ENCODE measurements at regions of chr11 and their contacts with region 1.

Region 1: DNA sequence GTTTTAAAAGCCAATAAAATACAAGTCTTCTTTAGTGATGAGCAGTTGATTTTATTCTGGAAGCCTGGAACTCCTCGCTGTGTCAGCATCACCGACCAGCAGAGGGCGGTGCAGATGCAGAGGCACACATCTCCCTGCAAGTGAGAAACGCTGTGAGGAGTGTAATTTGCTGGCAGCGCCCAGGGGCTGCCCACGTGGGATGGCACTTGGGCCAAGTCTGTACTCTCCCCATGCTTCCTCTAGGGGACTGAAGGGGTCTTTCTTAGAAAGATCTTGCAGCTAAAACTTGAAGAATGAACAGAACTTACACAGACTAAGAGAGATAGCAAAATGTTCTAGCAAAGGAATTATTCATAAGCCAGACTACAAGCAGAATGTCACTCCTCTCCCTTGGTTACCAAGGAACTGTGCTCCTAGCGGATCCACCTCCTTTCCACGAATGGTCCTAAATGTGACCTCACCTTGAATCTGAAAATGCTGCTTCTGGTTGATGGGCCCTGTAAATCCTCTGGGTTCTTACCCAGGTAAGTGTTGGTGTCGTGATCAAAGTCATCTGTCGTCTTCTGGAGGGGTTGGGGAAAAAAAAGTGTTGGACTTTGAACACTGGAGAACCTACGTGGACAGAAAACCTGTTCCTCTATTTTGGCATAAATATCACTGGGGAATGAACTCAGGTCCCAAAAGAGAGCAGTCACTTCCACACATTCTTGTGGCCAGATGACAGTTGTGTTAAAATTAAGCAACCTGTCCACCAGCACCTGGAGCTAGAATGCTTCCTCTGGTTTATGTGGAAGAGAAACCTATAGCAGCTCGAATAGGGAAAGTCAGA is 31.8 kb downstream of the CNTF start:
- DNase-seq: peak; percentile 51
- H3K4me3 Mint-ChIP-seq: no peak overlapping the region
- H3K27ac Mint-ChIP-seq: no peak overlapping the region
- H3K4me1 Mint-ChIP-seq: peaks cover 9% of the 10 kb centered on the region
- H3K27me3 Mint-ChIP-seq: peaks cover 4% of the 10 kb centered on the region

Region 2: DNA sequence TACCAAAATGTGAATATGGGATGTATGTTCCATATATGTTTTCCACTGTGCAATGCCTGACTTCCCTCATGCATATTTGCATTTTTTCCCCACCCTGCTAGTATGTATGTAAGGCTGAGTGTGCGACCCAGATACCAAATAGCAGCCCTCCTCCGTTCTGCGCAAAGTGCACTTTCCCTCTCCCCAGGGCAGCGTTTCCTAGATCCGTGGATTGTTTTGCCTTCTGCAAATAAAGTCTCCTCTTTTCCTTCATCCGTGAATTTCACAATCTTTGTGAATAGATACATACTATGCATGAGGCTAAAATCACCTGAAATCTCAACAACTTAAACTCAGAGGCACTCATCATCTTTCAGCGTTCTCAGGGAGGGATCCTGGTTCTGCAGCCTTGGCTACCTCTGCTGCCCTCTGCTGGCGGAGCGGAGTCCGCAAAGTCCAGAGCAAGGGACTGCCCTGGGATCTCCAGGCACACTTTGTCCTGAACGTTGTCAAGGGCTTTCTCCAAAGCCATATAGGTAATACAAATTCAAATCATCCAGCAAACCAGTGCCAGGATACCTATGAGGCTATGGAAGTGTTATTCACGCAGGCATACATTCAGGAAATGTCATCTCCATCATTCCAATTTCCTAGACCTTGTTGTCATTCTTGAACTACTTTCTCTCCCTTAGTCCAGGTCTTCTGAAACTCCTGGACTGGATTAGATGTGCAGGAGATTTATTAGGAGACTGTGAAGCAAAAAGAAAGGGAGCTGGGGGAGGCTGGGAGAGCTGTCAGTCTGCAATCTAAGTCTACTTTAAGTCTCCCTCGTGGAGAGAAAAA is 21.3 kb after region 1 on chr11:
- intact Hi-C with region 1: loop called (anchors 2 kb)
- DNase-seq: peak; percentile 49
- H3K4me3 Mint-ChIP-seq: no peak overlapping the region
- H3K27ac Mint-ChIP-seq: no peak overlapping the region
- H3K4me1 Mint-ChIP-seq: no peaks in the 10 kb centered on the region
- H3K27me3 Mint-ChIP-seq: no peaks in the 10 kb centered on the region

Region 3: GRCh38 chr11:58711832-58712231 is 57.5 kb after region 1 on chr11:
- intact Hi-C with region 1: no loop called
- DNase-seq: no peak
- H3K4me3 Mint-ChIP-seq: no peak overlapping the region
- H3K27ac Mint-ChIP-seq: no peak overlapping the region
- H3K4me1 Mint-ChIP-seq: no peaks in the 10 kb centered on the region
- H3K27me3 Mint-ChIP-seq: no peaks in the 10 kb centered on the region

Region 4: DNA sequence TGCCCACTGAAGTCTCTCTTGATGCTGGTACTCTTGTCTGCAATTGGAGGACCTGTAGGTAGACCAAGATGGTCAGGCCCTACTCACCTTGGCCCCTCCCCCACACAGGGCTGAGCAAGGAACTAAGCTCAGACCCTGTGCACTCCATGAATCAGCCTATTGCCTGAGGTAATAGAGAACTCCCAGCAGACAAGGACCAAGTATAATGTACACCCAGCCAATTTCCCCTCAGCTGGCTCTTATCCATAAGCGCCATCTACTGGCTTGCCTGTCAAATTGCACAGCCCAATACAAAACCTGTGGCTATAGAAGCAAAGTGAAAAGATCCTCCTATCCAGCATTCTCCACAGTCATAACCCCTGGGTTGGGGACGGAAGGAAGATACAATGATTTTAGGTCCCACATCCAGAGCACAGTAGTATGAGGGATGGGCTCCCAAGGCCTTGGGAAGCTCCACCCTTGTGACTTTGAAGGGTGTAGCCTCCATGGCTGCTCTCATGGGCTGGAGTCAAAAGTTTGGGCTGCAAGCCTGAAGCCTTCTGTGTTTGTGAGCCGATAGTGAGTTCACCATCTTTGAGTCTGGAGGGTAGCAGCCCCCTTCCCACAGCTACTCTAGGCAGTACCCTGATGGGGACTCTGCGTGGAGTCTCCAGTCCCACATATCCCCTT is 134.2 kb after region 1 on chr11:
- intact Hi-C with region 1: loop called (anchors 1 kb)
- DNase-seq: peak; percentile 23
- H3K4me3 Mint-ChIP-seq: no peak overlapping the region
- H3K27ac Mint-ChIP-seq: no peak overlapping the region
- H3K4me1 Mint-ChIP-seq: peaks cover 1% of the 10 kb centered on the region
- H3K27me3 Mint-ChIP-seq: no peaks in the 10 kb centered on the region